Activated B cell treated with CpG ODN at 0.5 μM for 24 hours (primary cell): ENCODE measurements at regions of chr2 and their contacts with region 1.

Region 1: DNA sequence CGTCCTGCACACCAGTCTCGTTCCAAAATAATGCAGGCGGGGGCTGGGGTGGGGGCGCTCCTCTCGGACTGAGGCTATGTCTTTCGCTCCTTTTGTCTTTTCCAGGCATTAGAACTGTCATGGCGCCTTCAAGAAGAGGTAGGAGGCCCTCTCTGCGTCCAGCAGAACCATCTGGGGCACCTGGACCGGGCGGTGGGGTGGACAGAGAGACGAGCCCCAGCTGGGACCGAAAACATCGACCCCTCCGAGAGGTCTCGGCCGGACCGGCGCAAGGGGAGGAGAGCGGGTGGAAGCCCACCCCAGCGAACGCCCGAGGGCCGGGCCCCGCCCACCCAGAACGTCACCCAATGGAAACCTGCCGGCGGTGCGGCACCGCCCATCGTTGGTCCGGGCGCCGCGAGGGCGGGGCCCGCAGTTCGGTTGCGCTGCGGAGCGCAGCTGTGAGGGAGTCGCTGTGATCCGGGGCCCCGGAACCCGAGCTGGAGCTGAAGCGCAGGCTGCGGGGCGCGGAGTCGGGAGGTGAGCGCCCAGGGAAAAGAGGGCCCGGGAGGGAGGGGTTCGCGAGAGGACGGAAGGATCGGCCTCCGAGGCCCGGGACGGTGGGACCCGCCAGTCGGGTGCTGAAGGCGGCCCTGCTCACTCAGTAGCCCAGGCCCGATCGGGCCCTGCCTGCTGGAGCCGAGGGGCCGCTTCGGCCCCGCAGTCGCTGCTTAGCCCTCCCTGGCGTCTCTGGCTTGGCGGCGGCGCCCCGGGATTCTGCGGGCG is at the start of gene NRBP1:
- DNase-seq: peak; percentile 95
- ATAC-seq: peak; percentile 90
- H3K4me3 Mint-ChIP-seq: peak within 1 kb of the TSS; percentile 98
- H3K27ac Mint-ChIP-seq: peak within 1 kb of the TSS; percentile 98
- H3K4me1 Mint-ChIP-seq: peaks cover 50% of the 10 kb centered on the region
- H3K27me3 Mint-ChIP-seq: no peaks in the 10 kb centered on the region
- CTCF ChIP-seq: no peak
- total RNA-seq, gene NRBP1: 78.9 and 82.3 TPM in 2 replicates

Region 2: DNA sequence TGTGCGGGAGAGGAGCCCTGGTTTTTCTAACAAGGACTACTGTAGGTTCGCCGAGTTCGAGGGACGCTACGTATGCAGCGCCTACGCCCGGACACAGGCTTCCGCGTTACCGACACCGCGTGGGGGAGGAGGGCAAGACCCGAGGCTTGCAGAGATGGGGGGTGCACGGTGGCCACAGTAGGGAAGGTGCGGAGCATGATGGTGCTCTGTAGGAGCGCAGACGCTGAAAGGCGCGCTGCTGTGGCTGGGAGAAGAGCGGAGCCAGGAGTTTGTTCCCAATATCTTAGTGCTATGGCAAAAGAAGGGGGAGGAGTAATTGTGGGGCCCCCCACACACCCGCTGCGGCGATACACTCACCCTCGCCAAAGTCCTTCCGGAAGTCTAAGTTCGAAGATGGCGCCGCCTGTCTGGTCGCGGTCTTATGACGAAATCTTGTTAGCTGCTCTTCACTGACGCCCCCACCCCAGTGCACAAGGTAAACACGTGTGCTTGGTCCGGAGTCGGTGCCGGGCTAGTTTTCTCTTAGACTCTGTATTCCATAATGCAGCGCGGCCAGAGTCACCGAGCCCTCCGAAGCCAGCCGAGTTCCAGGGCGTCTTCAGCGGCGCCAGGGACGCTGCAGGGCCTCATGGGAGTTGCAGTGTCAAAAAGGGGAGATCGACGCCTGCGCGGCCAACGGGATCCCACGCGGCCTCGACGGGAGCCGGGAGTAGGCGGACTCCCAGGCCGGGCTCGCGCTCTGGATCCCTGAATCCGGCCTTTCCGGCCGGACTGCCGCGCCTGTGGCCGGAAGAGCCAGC is 71.8 kb before region 1 on chr2 and contains the start of gene GTF3C2:
- CTCF ChIA-PET with region 1: no interaction called
- POLR2A ChIA-PET with region 1: interaction called, 21 read pairs
- intact Hi-C with region 1: loop called (anchors 1 kb)
- DNase-seq: peak; percentile 87
- ATAC-seq: peak; percentile 83
- H3K4me3 Mint-ChIP-seq: peak within 1 kb of the TSS; percentile 98
- H3K27ac Mint-ChIP-seq: peak within 1 kb of the TSS; percentile 100
- H3K4me1 Mint-ChIP-seq: peaks cover 53% of the 10 kb centered on the region
- H3K27me3 Mint-ChIP-seq: no peaks in the 10 kb centered on the region
- CTCF ChIP-seq: no peak
- total RNA-seq, gene GTF3C2: 91.7 and 119 TPM in 2 replicates

Region 3: DNA sequence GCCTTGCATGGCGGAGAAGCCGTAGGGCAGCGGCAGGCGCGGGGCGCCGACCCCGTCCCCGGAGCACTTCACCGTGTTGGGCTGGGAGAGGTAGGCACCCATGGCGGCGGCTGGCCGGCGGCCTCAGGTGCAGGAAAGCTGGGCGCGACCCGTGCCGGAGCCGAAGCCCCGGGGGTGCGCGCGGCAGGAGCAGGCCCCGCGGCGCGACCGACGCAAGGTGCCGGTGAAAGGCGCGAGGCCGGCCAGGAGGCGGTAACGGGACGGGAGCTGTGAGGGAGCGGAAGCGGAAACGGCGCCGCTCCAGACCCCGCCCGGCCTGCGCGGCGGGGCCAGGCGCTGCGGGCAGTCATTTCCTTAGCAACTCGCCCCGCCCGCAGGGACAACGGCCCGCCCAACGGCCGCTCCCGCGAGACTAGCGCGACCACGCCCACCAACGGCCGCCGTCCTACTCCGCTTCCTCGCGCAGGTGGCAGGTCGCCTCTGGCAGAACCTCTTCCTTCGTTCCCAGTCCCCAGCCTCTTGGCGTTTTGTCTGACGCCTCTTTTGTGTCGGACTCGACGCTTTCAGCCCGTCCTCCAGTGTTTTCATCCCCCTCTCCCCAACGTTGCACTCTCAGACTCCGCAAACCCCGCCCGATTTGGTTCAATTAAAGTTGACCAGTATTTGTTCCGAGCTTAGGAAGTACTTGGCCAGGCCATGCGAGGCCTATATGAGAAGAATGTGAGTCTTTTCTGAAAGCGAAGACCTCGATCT is 18.9 kb before region 1 on chr2 and contains the start of gene PPM1G:
- CTCF ChIA-PET with region 1: interaction called, 15 read pairs
- POLR2A ChIA-PET with region 1: interaction called, 54 read pairs
- intact Hi-C with region 1: loop called (anchors 1 kb)
- DNase-seq: peak; percentile 98
- ATAC-seq: peak; percentile 96
- H3K4me3 Mint-ChIP-seq: peak within 1 kb of the TSS; percentile 87
- H3K27ac Mint-ChIP-seq: peak within 1 kb of the TSS; percentile 95
- H3K4me1 Mint-ChIP-seq: peaks cover 31% of the 10 kb centered on the region
- H3K27me3 Mint-ChIP-seq: no peaks in the 10 kb centered on the region
- CTCF ChIP-seq: no peak
- total RNA-seq, gene PPM1G: 74.7 and 75.2 TPM in 2 replicates

Region 4: GRCh38 chr2:27582695-27583389 is 154.4 kb after region 1 on chr2 and contains the start of gene ZNF512:
- CTCF ChIA-PET with region 1: no interaction called
- POLR2A ChIA-PET with region 1: interaction called, 3 read pairs
- intact Hi-C with region 1: loop called (anchors 2 kb)
- DNase-seq: peak; percentile 81
- ATAC-seq: peak; percentile 95
- H3K4me3 Mint-ChIP-seq: peak within 1 kb of the TSS; percentile 97
- H3K27ac Mint-ChIP-seq: peak within 1 kb of the TSS; percentile 90
- H3K4me1 Mint-ChIP-seq: peaks cover 48% of the 10 kb centered on the region
- H3K27me3 Mint-ChIP-seq: peaks cover 4% of the 10 kb centered on the region
- CTCF ChIP-seq: no peak
- total RNA-seq, gene ZNF512: 45.4 and 48.7 TPM in 2 replicates